Panc1 (cell line): ENCODE measurements at regions of chr1 and their contacts with region 1.

Region 1: DNA sequence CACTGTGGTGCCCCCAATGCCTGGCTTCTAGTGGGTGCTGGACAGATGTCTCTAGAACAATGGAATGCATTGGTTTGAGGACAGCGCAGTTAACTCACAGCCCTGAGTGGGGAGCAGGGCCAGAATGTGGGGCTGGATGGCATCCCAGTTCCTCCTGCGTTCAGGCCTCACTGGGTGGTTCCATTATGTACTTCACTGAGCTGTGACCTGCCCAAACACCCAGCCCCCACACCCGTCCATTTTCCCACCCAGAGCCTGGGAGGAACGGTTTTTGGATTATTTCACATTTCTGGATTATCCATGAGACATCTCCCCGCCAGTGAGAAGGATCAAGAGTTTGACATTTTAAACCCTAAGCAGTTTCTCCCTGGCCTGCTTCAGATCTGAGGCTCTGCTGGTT is 55.3 kb upstream of the WASF2 start:
- DNase-seq: no peak
- ATAC-seq: no peak
- H3K4me3 ChIP-seq: no peak overlapping the region
- H3K27ac ChIP-seq: peak overlapping the region; percentile 58
- H3K4me1 ChIP-seq: peaks cover 57% of the 10 kb centered on the region
- H3K27me3 ChIP-seq: no peaks in the 10 kb centered on the region
- CTCF ChIP-seq: no peak

Region 2: DNA sequence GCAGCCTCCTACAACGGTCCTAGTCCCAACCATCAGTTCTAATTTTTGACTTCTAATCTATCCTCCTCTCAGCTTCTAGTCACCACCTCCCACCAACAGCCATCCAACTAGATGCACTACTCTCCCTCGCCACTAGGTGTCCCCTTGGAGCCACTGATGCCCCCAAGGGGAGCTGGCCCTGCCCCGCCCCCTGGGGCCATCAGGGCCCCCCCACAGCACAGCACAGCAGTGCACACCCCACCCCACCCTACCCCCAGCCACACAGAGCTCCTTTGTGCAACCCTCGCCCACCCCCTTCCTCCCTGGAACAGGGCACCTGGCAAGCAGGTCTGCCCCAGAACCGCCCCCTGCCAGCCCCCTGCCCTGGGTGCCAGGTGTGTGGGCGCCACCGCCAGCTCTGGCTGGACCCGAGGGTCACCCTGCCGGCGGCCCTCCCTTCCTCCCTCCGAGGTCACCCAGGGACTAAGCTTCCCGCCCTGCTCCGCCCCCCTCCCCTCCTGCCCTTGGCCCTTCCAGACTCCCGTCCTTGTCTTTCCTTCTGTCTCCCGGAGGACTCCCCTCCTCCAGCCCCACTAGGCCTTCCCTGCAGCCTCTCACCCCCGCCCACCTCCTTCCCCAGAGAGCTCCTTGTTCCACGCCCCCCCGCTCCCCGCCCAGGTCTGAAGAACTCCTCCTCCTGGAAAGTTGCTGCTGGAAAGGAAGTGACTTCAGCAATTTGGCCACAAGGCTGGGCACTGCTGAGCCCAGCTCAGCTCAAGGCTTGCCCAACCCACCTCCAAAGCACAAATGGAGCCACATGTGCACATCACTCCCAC is 11.7 kb after region 1 on chr1:
- CTCF ChIA-PET with region 1: interaction called, 12 read pairs
- POLR2A ChIA-PET with region 1: no interaction called
- in situ Hi-C with region 1: no loop called
- intact Hi-C with region 1: no loop called
- DNase-seq: no peak
- ATAC-seq: peak; percentile 77
- H3K4me3 ChIP-seq: no peak overlapping the region
- H3K27ac ChIP-seq: peak overlapping the region; percentile 78; the same call in 1 of the 2 replicates
- H3K4me1 ChIP-seq: peaks cover 52% of the 10 kb centered on the region
- H3K27me3 ChIP-seq: no peaks in the 10 kb centered on the region
- CTCF ChIP-seq: peak; percentile 93